ENCODE measurements at regions of chr19 and their contacts with region 1.

Region 1: GRCh38 chr19:49391581-49392399 is 3.7 kb downstream of the KASH5 start:
- DNase-seq: peak; percentile 57 to 74 (median 64)
- H3K4me3 ChIP-seq: no peak overlapping the region
- H3K27ac ChIP-seq: no peak overlapping the region
- H3K4me1 ChIP-seq: no peaks in the 10 kb centered on the region
- H3K27me3 ChIP-seq: no peaks in the 10 kb centered on the region
- CTCF ChIP-seq: peak in 2 of 3 donors; percentile 60 to 62
- EP300 ChIP-seq: no peak
- POLR2A ChIP-seq: no peak

Region 2: GRCh38 chr19:48720613-48721296 is 671.0 kb before region 1 on chr19:
- intact Hi-C with region 1: no loop called
- DNase-seq: peak; percentile 97 to 100 (median 99)
- H3K4me3 ChIP-seq: peak overlapping the region; percentile 51
- H3K27ac ChIP-seq: peak overlapping the region; percentile 78 to 96
- H3K4me1 ChIP-seq: peaks cover 36% of the 10 kb centered on the region
- H3K27me3 ChIP-seq: no peaks in the 10 kb centered on the region
- CTCF ChIP-seq: no peak
- EP300 ChIP-seq: no peak
- POLR2A ChIP-seq: peak; percentile 27

Region 3: DNA sequence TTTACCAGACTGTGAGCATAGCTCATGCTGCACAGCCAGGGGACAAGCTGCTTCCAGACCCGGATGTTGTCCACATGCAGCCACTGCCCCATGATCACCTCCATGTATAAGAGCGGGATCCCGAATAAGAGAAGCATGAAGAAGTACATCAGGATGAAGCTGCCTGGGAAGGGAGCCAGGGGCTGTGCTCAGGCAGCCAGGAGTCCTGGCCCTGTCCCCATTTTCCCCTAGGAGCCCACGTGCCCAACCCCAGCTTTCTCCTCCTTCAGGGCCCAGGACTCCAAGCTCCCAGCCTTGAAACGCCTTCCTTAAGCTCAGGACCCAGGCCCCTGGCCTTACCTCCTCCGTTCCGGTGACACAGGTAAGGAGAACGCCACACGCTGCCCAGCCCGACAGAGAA is 136.1 kb before region 1 on chr19:
- intact Hi-C with region 1: no loop called
- DNase-seq: no peak
- H3K4me3 ChIP-seq: no peak overlapping the region
- H3K27ac ChIP-seq: no peak overlapping the region
- H3K4me1 ChIP-seq: no peaks in the 10 kb centered on the region
- H3K27me3 ChIP-seq: no peaks in the 10 kb centered on the region
- CTCF ChIP-seq: no peak
- EP300 ChIP-seq: no peak
- POLR2A ChIP-seq: no peak

Region 4: GRCh38 chr19:49436369-49437017 is 44.7 kb after region 1 on chr19:
- intact Hi-C with region 1: loop called in 1 of 4 experiments (anchors 5 kb)
- DNase-seq: no peak
- H3K4me3 ChIP-seq: no peak overlapping the region
- H3K27ac ChIP-seq: no peak overlapping the region
- H3K4me1 ChIP-seq: no peaks in the 10 kb centered on the region
- H3K27me3 ChIP-seq: peaks cover 6% of the 10 kb centered on the region
- CTCF ChIP-seq: no peak
- EP300 ChIP-seq: no peak
- POLR2A ChIP-seq: no peak

Region 5: GRCh38 chr19:49451430-49452181 is 59.8 kb after region 1 on chr19 and contains the start of gene PIH1D1:
- intact Hi-C with region 1: no loop called
- DNase-seq: peak; percentile 94 to 97 (median 95)
- H3K4me3 ChIP-seq: peak within 1 kb of the TSS; percentile 78
- H3K27ac ChIP-seq: peak within 1 kb of the TSS; percentile 86 to 95
- H3K4me1 ChIP-seq: no peaks in the 10 kb centered on the region
- H3K27me3 ChIP-seq: no peaks in the 10 kb centered on the region
- CTCF ChIP-seq: no peak
- EP300 ChIP-seq: no peak
- POLR2A ChIP-seq: peak; percentile 32
- total RNA-seq, gene PIH1D1: 42.6 to 69.4 (median 58.5) TPM